ENCODE measurements at regions of chr2 and their contacts with region 1.

Region 1: DNA sequence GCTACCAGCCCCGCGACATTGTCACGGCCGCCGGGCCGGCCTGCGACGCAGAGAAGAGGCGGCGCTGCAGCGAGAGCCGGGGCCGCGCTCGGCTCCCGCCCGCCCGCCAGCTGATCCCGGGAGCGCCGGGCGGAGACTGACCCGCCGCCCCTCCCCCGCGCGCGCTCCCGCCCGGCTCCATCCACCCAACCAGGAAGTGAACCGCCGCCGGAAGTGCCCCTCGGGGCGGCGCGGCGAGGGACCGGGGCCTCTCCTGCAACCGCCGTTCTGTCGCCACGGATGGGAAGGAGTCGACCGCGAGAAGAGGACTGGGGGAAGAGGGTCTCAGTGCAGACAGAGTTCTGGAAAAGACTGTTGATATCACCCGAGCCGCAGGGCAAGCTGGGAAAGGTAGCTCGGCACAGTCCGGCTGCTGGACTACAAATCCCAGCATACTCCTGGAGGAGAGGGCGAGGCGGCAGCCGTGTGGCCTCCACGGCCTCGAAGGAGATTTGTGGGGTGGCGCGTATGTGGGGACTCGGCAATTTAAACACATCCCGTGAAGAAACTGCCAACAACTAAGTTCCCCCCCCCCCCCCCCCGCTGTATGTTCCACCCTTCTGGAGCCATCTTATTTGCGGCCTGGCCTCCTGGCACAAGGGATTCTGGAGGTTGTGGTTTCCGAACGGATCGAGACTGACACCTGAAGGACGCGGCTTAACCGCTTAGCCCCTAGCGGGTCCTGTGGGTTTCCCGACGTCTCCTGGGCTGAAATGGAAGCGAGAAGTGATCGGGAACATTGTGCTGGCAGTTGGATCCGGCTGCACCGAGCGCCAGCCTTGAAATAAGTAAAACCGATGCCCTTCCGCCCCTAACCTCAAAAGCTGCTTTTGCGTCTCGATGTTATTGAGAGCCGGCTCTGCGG is at the start of gene AAK1:
- DNase-seq: peak; percentile 87
- H3K4me3 ChIP-seq: peak within 1 kb of the TSS; percentile 92 to 96 (median 95)
- H3K27ac ChIP-seq: peak within 1 kb of the TSS; percentile 81
- H3K4me1 ChIP-seq: peaks cover 35% of the 10 kb centered on the region
- H3K27me3 ChIP-seq: no peaks in the 10 kb centered on the region
- CTCF ChIP-seq: no peak
- total RNA-seq, gene AAK1: 86.2 to 97.0 TPM

Region 2: GRCh38 chr2:69061525-69061924 is 582.3 kb before region 1 on chr2:
- CTCF ChIA-PET with region 1: no interaction called
- dilution Hi-C with region 1: no loop called
- in situ Hi-C with region 1: no loop called
- intact Hi-C with region 1: no loop called
- DNase-seq: no peak
- H3K4me3 ChIP-seq: no peak overlapping the region
- H3K27ac ChIP-seq: no peak overlapping the region
- H3K4me1 ChIP-seq: peaks cover 5% of the 10 kb centered on the region
- H3K27me3 ChIP-seq: no peaks in the 10 kb centered on the region
- CTCF ChIP-seq: no peak

Region 3: DNA sequence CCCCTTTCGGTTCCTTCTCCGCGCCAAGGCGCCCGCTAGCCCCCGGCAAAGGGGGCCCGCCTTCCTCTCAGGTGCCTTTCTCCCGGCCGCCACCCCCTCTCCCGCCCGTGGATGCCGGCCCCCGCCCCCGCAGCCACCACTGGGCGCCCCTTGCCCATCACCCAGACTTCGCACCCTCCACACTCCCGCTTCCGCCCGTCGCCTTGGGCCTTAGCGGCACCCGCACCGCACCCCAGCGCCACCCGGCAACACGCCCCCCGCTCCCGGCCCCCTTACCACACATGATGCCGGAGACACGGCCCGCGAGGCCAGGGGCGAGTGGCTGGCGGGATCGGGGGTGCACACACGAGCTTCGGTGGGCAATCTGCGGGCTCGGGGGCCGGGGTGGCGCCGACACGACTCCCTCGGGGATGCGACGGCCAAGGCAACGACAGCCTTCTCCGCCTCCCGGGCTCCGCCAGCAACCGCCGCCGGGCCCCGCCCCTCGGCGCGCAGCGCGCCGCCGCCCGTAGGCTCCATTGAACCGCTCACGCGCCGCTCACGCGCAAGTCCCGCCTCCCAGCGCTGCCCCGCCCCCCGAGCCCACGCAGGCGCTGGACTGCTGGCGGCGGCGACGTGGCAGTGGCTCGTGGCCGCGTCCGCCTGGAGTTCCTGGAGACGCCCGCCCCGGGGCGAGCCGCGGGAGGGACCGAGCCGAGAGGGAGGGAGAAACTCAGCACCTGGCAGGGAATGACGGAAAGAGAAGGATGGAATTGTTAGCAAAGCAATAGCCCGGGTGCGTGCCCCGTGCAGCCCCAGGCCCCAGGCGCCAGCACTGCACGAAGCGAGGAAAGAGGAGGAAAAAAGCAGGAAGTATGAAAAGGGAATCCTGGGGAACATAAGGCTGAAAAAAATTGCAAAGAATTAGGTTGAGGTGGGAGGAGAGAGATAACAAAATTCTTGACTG is 256.8 kb before region 1 on chr2 and contains the start of gene GFPT1:
- CTCF ChIA-PET with region 1: no interaction called
- dilution Hi-C with region 1: no loop called
- in situ Hi-C with region 1: no loop called
- intact Hi-C with region 1: loop called (anchors 10 kb)
- DNase-seq: peak; percentile 93
- H3K4me3 ChIP-seq: peak within 1 kb of the TSS; percentile 92 to 98 (median 98)
- H3K27ac ChIP-seq: peak within 1 kb of the TSS; percentile 74
- H3K4me1 ChIP-seq: peaks cover 11% of the 10 kb centered on the region
- H3K27me3 ChIP-seq: no peaks in the 10 kb centered on the region
- CTCF ChIP-seq: no peak
- total RNA-seq, gene GFPT1: 43.7 to 76.3 TPM

Region 4: DNA sequence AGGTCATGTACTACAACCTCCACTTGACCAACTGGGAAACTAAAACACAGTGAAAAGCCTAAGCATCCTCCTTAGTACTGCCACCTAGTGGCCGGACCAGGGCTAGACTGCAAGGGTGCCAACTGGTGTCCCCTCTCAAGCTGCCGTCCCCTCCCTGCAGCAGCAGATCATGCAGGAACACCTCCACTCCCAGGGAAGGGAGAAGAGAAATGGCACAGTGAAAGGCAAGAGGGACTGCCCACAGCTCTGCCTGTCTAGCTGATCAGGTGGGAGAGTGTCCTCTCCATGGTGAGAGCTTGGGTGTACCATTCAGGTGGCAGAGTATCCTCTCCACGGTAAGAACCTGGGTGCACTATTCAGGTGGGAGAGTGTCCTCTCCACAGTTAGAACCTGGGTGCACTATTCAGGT is 78.4 kb before region 1 on chr2:
- CTCF ChIA-PET with region 1: no interaction called
- dilution Hi-C with region 1: loop called (anchors 5 kb)
- in situ Hi-C with region 1: no loop called
- intact Hi-C with region 1: loop called (anchors 2 kb)
- DNase-seq: no peak
- H3K4me3 ChIP-seq: no peak overlapping the region
- H3K27ac ChIP-seq: no peak overlapping the region
- H3K4me1 ChIP-seq: peaks cover 27% of the 10 kb centered on the region
- H3K27me3 ChIP-seq: no peaks in the 10 kb centered on the region
- CTCF ChIP-seq: peak; percentile 67 to 84

Region 5: DNA sequence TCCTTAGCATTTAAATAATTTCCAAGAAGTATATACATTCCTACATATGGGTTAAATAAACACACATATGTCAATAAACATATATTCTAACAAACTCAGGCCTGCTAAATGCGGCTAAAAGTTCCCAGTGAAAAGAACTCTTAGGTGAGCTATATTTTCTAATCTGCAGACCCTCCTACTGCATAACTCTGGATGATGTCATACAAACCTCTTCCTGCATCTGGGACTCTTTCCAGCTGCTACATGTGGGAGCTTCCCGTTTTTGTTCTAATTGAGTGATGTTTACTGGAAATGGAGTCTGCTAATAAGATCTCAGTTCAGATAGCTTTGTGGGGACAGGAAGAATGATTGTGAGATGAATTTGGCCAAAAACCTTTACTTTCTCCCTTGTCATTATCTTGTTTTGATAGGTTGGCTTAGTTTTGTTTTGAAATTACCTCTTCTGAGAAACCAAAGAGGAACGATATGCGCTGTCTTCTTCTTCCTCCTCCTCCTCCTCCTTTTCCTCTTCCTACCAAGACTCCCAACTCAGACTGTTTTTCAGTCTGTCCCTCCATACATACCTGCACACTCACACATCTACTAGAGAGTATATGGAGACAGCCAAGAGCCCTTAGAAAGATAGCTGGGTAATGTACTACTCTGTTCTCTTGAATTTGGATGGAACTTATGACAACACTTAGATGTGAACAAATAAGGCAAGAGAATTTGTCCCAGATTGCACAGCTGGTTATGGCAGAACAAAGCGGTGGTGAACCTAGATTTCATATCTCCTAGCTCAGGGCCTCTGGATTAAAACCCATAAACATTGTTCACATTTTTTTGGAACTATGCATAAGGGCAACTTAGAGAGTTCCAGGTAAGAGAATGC is 39.5 kb after region 1 on chr2:
- CTCF ChIA-PET with region 1: no interaction called
- dilution Hi-C with region 1: no loop called
- in situ Hi-C with region 1: no loop called
- intact Hi-C with region 1: loop called (anchors 5 kb)
- DNase-seq: peak; percentile 52
- H3K4me3 ChIP-seq: no peak overlapping the region
- H3K27ac ChIP-seq: peak overlapping the region; percentile 52
- H3K4me1 ChIP-seq: peaks cover 32% of the 10 kb centered on the region
- H3K27me3 ChIP-seq: no peaks in the 10 kb centered on the region
- CTCF ChIP-seq: no peak

Region 6: GRCh38 chr2:69717861-69718273 is 74.0 kb after region 1 on chr2:
- CTCF ChIA-PET with region 1: no interaction called
- dilution Hi-C with region 1: no loop called
- in situ Hi-C with region 1: no loop called
- intact Hi-C with region 1: loop called (anchors 1 kb)
- DNase-seq: peak; percentile 49
- H3K4me3 ChIP-seq: no peak overlapping the region
- H3K27ac ChIP-seq: no peak overlapping the region
- H3K4me1 ChIP-seq: peaks cover 12% of the 10 kb centered on the region
- H3K27me3 ChIP-seq: no peaks in the 10 kb centered on the region
- CTCF ChIP-seq: no peak

Region 7: GRCh38 chr2:69804416-69804815 is 160.6 kb after region 1 on chr2:
- CTCF ChIA-PET with region 1: no interaction called
- dilution Hi-C with region 1: no loop called
- in situ Hi-C with region 1: no loop called
- intact Hi-C with region 1: no loop called
- DNase-seq: no peak
- H3K4me3 ChIP-seq: no peak overlapping the region
- H3K27ac ChIP-seq: no peak overlapping the region
- H3K4me1 ChIP-seq: peaks cover 2% of the 10 kb centered on the region
- H3K27me3 ChIP-seq: no peaks in the 10 kb centered on the region
- CTCF ChIP-seq: no peak

Region 8: DNA sequence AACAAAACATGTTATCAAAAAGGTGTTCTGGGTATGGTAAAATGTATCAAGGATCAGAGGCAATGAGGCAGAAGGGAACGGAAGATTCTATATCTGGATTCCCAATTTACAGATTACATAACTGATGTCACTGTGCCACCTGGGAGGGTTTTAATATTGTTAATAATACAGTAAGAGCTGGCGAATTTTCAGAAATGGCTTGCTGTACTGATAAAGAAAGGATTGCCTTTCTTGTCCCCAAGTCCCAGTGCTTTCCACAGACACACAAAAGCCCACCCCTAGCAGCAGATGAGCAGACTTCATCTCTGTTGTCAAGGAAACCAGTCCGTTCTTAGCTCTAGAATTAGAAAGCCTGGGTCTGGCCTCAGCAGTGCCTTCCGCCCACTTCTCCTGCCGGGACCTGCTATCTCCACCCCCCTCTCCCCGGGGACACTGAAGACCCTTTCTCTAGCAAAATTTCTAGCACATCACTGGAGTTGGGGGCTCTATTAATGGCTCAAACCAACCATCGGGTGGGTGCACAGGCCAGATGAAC is 1089.9 kb after region 1 on chr2:
- CTCF ChIA-PET with region 1: no interaction called
- dilution Hi-C with region 1: no loop called
- in situ Hi-C with region 1: no loop called
- intact Hi-C with region 1: no loop called
- DNase-seq: no peak
- H3K4me3 ChIP-seq: no peak overlapping the region
- H3K27ac ChIP-seq: no peak overlapping the region
- H3K4me1 ChIP-seq: no peaks in the 10 kb centered on the region
- H3K27me3 ChIP-seq: peaks cover 2% of the 10 kb centered on the region
- CTCF ChIP-seq: no peak